Left cardiac atrium (tissue), 4 donors: ENCODE measurements at regions of chr11 and their contacts with region 1.

Region 1: DNA sequence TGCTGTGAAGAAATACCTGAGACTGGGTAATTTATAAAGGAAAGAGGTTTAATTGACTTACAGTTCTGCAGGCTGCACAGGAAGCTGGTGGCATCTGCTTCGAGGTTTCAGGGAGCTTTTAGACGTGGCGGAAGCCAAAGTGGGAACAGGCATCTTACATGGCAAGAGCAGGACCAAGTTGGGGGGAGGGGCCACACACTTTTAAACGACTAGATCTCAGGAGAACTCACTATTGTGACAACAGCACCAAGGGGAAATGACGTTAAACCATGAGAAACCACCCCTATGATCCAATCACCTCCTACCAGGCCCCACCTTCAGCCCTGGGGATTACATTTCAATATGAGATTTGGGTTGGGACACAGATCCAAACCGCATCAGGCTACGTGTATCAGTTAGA is 11.1 kb upstream of the SCGB1D4 start:
- DNase-seq: no peak
- ATAC-seq: no peak

Region 2: DNA sequence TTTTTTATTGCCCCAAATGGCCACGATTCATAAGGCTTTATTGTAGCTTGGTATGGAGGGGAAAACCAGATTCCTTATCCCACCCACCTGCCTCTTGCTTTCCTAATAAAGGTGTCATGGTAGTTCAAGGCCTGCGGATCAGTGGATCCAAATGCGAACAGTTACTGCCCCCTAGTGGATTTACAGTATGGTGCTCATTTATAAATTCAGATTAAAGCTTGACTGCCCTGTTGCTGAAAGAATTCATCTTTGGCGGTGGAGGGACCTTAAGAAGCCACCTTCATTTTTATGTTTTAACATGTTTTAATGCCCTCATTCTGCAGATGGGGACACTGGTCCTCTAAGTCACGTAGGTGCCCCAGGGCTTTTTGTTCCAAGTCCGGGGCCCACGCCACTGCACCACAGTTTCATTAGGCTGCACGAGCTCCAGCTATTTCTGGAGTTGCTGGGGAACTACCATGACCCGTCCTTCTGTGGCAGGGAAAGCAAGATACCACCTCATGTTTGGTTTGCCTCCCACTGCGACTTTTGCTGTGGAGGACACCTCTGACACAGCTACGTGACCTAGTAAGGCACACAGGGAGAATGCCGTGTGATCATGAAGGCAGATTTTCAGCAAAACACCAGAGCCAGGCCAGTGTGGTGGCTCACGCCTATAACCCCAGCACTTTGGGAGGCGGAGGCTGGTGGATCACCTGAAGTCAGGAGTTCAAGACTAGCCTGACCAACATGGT is 201.8 kb before region 1 on chr11:
- intact Hi-C with region 1: no loop called
- DNase-seq: no peak
- ATAC-seq: peak; percentile 12 to 25

Region 3: GRCh38 chr11:62169935-62170548 is 139.9 kb before region 1 on chr11:
- intact Hi-C with region 1: loop called in 1 of 2 experiments (anchors 5 kb)
- DNase-seq: no peak
- ATAC-seq: peak; percentile 47 to 70

Region 4: DNA sequence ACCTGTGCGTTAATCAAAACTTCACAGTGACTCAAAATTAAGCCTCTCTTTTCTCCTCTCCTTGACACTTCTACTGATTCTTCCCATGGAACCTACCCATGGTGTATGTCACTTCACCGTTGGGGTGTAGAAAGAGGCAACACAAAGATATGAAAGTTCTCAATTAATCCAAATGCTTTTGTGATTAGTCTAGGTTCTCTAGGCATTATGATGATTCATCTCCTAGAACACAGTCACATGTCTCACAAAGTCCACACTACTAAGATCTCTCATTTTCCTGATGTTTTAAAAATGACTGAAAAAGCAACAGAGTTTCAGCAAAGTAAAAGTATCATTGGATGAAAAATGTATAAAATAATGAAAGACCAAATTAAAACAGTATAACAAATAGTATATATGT is 53.7 kb before region 1 on chr11:
- intact Hi-C with region 1: no loop called
- DNase-seq: no peak
- ATAC-seq: no peak